Sigmoid colon (tissue), 7 donors: ENCODE measurements at regions of chr12 and their contacts with region 1.

Region 1: GRCh38 chr12:6662906-6663742 is at the start of gene ING4:
- DNase-seq: peak; percentile 99
- H3K4me3 ChIP-seq: peak within 1 kb of the TSS; percentile 58 to 79 (median 70)
- H3K27ac ChIP-seq: peak within 1 kb of the TSS; percentile 78 to 85 (median 82)
- H3K4me1 ChIP-seq: peaks cover 0 to 14% (median 11%) of the 10 kb centered on the region in 4 donors
- H3K27me3 ChIP-seq: no peaks in the 10 kb centered on the region
- CTCF ChIP-seq: no peak
- EP300 ChIP-seq: peak in 1 of 4 donors; percentile 21
- POLR2A ChIP-seq: no peak
- total RNA-seq, gene ING4: 52.8 to 85.9 (median 63.4) TPM

Region 2: DNA sequence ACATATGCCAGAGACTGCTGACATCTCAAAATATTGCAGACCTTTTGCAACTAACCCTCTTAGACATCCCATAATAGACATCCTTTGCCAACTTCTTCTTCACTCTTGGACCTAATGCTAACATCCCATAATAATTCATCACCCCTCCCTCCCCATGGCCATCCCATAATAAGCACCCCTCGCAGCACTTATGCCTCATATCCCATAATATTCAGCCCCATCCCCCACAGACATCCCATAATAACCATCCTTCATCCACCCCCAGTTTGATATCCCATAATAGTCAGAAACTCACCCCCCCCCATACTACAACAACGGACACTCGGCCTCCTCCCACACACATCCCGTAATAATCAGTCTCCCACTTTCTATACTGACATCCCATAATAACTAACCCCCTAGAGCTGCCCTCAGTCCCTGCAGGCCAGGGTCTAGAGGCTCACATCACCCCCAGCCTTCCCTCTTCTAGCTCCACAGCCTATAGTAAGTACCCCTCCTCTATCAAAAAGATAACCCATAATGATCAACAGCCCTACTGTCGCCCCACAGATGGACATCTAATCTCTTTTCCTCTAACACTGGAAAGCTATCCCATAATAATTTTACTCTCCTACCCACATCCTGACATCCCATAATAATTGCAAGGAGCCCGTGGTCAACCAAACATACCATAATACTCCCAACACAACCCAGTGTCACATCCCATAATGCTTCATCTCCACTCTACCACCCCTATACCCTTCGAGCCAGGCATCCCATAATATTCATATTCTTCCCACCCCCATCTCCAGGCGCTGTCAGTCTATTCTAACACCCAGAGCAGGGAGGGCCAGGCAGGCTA is 55.2 kb before region 1 on chr12:
- intact Hi-C with region 1: loop called (anchors 2 kb)
- DNase-seq: peak; percentile 82
- H3K4me3 ChIP-seq: no peak overlapping the region
- H3K27ac ChIP-seq: peak overlapping the region; percentile 92 to 100 (median 98)
- H3K4me1 ChIP-seq: peaks cover 0 to 65% (median 56%) of the 10 kb centered on the region in 4 donors
- H3K27me3 ChIP-seq: no peaks in the 10 kb centered on the region
- CTCF ChIP-seq: no peak
- EP300 ChIP-seq: no peak
- POLR2A ChIP-seq: no peak

Region 3: DNA sequence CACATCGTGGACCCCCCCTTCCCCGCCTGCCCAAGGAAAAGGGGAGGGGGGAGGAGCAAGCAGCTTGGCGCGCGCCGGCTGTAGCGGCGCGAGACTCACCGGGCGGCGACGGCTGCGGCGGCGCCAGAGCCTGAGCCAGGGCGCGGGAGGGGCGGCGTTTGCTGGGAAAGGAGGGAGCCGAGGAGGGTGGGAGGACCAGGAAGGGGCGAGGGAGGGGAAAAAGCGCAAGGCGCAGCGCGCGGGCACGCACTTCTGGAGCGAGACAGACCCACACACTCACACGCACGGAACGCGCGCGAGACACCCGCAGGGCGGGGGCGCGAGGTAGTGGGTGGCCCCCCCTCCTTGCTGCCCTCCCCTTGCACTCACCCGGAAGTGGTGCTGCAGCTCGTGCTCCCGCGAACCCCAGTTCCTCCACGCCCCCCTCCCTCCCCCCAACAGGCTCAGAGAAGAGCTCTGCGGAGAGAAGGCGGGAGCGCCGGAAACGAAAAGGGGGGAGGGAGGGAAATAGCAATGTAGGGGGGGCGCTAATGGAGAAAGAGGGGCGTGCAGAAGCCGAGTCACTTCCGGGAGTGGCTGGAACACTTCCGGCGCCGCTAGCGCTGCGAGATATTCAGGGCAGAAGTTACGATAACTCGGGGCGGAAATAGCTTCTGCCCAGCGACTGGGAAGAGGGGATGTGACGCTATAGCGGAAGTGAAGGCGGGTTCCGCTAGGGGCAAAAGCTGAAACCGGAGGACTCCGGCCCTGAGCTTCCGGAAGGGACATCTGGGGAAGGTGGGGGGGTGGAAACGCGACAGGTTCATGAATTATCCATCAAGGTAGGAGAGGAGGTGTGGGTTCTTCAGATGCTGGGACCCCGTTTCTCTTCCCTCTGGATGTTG is 26.1 kb after region 1 on chr12 and contains the start of gene ZNF384:
- intact Hi-C with region 1: loop called (anchors 1 kb)
- DNase-seq: peak; percentile 99
- H3K4me3 ChIP-seq: peak within 1 kb of the TSS; percentile 94 to 98 (median 96)
- H3K27ac ChIP-seq: peak within 1 kb of the TSS; percentile 98 to 100 (median 100)
- H3K4me1 ChIP-seq: peaks cover 0 to 40% (median 36%) of the 10 kb centered on the region in 4 donors
- H3K27me3 ChIP-seq: no peaks in the 10 kb centered on the region
- CTCF ChIP-seq: peak in 2 of 4 experiments; percentile 22 to 35
- EP300 ChIP-seq: peak in 2 of 4 donors; percentile 8 to 40
- POLR2A ChIP-seq: peak; percentile 30 to 47
- total RNA-seq, gene ZNF384: 24.0 to 32.6 (median 28.7) TPM

Region 4: DNA sequence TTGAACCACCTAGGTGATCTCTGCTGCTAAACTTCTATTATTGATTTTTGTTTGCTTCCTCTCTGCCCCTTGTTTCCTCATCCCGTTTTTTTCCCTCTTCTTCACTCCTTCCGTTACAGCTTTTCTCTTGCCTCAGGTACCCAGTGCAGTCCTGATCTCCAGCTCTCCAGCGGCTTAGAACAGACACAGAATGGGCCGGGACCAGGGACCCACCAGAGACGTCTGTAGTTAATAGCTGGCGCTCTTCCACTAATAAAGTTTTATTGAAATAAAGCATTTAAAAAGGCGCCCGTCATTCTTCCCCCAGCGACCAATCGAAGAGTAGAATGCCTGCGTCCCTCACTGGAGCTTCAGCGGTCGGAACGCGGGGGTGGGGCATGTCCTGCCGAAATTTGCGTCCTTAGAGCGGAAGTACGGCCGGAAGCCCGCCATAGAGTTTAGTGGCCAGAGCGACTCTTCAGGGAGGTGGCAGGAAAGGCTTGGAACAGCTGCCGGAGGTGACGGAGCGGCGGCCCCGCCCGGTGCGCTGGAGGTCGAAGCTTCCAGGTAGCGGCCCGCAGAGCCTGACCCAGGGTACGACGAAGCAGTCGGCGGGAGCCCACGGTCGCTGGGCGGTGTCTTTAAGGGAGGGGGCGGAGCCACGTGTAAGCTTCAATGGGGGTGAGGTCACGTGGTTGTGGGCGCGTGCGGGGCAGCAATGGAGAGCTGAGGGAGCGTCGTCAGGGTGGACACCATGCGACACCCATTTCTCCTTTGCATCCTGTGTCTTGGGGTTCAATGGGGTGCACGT is 60.7 kb after region 1 on chr12 and contains the start of gene COPS7A:
- intact Hi-C with region 1: loop called (anchors 5 kb)
- DNase-seq: peak; percentile 99
- H3K4me3 ChIP-seq: peak within 1 kb of the TSS; percentile 52 to 67 (median 55)
- H3K27ac ChIP-seq: peak within 1 kb of the TSS; percentile 80 to 86 (median 84)
- H3K4me1 ChIP-seq: peaks cover 0 to 15% (median 14%) of the 10 kb centered on the region in 4 donors
- H3K27me3 ChIP-seq: no peaks in the 10 kb centered on the region
- CTCF ChIP-seq: no peak
- EP300 ChIP-seq: peak in 1 of 4 donors; percentile 19
- POLR2A ChIP-seq: peak; percentile 13 to 52
- total RNA-seq, gene COPS7A: 51.3 to 69.3 (median 60.1) TPM